Caco-2 (cell line): ENCODE measurements at regions of chr1 and their contacts with region 1.

Region 1: GRCh38 chr1:22416555-22417454 is 34.8 kb upstream of the ZBTB40 start:
- DNase-seq: peak; percentile 84 to 90
- H3K4me3 ChIP-seq: no peak overlapping the region
- H3K4me3 Mint-ChIP-seq: peak overlapping the region; percentile 50
- H3K27ac Mint-ChIP-seq: no peak overlapping the region
- H3K4me1 ChIP-seq: peaks cover 52% of the 10 kb centered on the region
- H3K4me1 Mint-ChIP-seq: peaks cover 32% of the 10 kb centered on the region
- H3K27me3 ChIP-seq: no peaks in the 10 kb centered on the region
- H3K27me3 Mint-ChIP-seq: no peaks in the 10 kb centered on the region
- CTCF ChIP-seq: peak; percentile 92 to 94

Region 2: GRCh38 chr1:22105611-22106207 is 311.1 kb before region 1 on chr1:
- CTCF ChIA-PET with region 1: interaction called, 18 read pairs
- POLR2A ChIA-PET with region 1: no interaction called
- intact Hi-C with region 1: loop called (anchors 1 kb)
- DNase-seq: peak in 1 of 2 experiments; percentile 50
- H3K4me3 ChIP-seq: no peak overlapping the region
- H3K4me3 Mint-ChIP-seq: no peak overlapping the region
- H3K27ac Mint-ChIP-seq: no peak overlapping the region
- H3K4me1 ChIP-seq: no peaks in the 10 kb centered on the region
- H3K4me1 Mint-ChIP-seq: no peaks in the 10 kb centered on the region
- H3K27me3 ChIP-seq: no peaks in the 10 kb centered on the region
- H3K27me3 Mint-ChIP-seq: no peaks in the 10 kb centered on the region
- CTCF ChIP-seq: peak; percentile 77 to 85

Region 3: DNA sequence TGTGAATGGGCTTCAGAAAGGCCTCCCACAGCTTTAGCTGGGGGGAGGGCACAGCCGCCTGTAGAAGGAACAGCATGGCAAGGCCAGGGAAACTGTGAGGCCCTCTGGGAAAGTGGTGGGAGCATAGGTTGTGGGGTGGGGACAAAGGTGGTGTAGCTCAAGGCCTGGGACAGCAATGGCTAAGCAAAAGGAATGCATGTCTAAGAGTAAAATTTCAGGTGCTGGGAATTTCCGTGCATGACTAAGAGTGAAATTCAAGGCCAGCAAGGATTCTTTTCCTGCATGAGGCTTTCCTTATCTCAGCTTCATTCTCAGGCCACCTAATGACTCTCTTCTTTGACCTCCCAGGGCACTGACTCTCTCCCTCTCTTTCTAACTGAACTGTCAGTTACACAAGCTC is 187.4 kb before region 1 on chr1:
- CTCF ChIA-PET with region 1: no interaction called
- POLR2A ChIA-PET with region 1: no interaction called
- intact Hi-C with region 1: loop called (anchors 10 kb)
- DNase-seq: peak in 1 of 2 experiments; percentile 29
- H3K4me3 ChIP-seq: no peak overlapping the region
- H3K4me3 Mint-ChIP-seq: no peak overlapping the region
- H3K27ac Mint-ChIP-seq: no peak overlapping the region
- H3K4me1 ChIP-seq: peaks cover 18% of the 10 kb centered on the region
- H3K4me1 Mint-ChIP-seq: peaks cover 19% of the 10 kb centered on the region
- H3K27me3 ChIP-seq: no peaks in the 10 kb centered on the region; the same call in 1 of the 2 replicates
- H3K27me3 Mint-ChIP-seq: no peaks in the 10 kb centered on the region
- CTCF ChIP-seq: no peak

Region 4: GRCh38 chr1:22347854-22348760 is 68.7 kb before region 1 on chr1:
- CTCF ChIA-PET with region 1: no interaction called
- POLR2A ChIA-PET with region 1: no interaction called
- intact Hi-C with region 1: loop called (anchors 5 kb)
- DNase-seq: peak in 1 of 2 experiments; percentile 29
- H3K4me3 ChIP-seq: no peak overlapping the region
- H3K4me3 Mint-ChIP-seq: peak overlapping the region; percentile 49
- H3K27ac Mint-ChIP-seq: no peak overlapping the region
- H3K4me1 ChIP-seq: peaks cover 12% of the 10 kb centered on the region
- H3K4me1 Mint-ChIP-seq: peaks cover 6% of the 10 kb centered on the region
- H3K27me3 ChIP-seq: no peaks in the 10 kb centered on the region; the same call in 1 of the 2 replicates
- H3K27me3 Mint-ChIP-seq: peaks cover 2% of the 10 kb centered on the region
- CTCF ChIP-seq: no peak

Region 5: GRCh38 chr1:22500471-22500870 is 83.7 kb after region 1 on chr1:
- CTCF ChIA-PET with region 1: no interaction called
- POLR2A ChIA-PET with region 1: no interaction called
- intact Hi-C with region 1: loop called (anchors 10 kb)
- DNase-seq: no peak
- H3K4me3 ChIP-seq: no peak overlapping the region
- H3K4me3 Mint-ChIP-seq: no peak overlapping the region
- H3K27ac Mint-ChIP-seq: no peak overlapping the region
- H3K4me1 ChIP-seq: peaks cover 18% of the 10 kb centered on the region
- H3K4me1 Mint-ChIP-seq: no peaks in the 10 kb centered on the region
- H3K27me3 ChIP-seq: no peaks in the 10 kb centered on the region
- H3K27me3 Mint-ChIP-seq: no peaks in the 10 kb centered on the region
- CTCF ChIP-seq: no peak

Region 6: GRCh38 chr1:22536506-22536905 is 119.7 kb after region 1 on chr1:
- CTCF ChIA-PET with region 1: no interaction called
- POLR2A ChIA-PET with region 1: no interaction called
- intact Hi-C with region 1: no loop called
- DNase-seq: no peak
- H3K4me3 ChIP-seq: no peak overlapping the region
- H3K4me3 Mint-ChIP-seq: no peak overlapping the region
- H3K27ac Mint-ChIP-seq: no peak overlapping the region
- H3K4me1 ChIP-seq: no peaks in the 10 kb centered on the region
- H3K4me1 Mint-ChIP-seq: no peaks in the 10 kb centered on the region
- H3K27me3 ChIP-seq: no peaks in the 10 kb centered on the region
- H3K27me3 Mint-ChIP-seq: no peaks in the 10 kb centered on the region
- CTCF ChIP-seq: no peak